Natural killer cell (primary cell): ENCODE measurements at regions of chr13 and their contacts with region 1.

Region 1: GRCh38 chr13:26186118-26186870 is 35.8 kb downstream of the RNF6 start:
- DNase-seq: peak; percentile 91 to 97
- ATAC-seq: peak; percentile 89 to 97 (median 92)
- H3K4me3 ChIP-seq: peak overlapping the region; percentile 69
- H3K4me3 Mint-ChIP-seq: peak overlapping the region; percentile 98
- H3K27ac ChIP-seq: peak overlapping the region; percentile 77
- H3K27ac Mint-ChIP-seq: peak overlapping the region; percentile 93 to 97
- H3K4me1 ChIP-seq: peaks cover 21% of the 10 kb centered on the region
- H3K4me1 Mint-ChIP-seq: peaks cover 9 to 22% of the 10 kb centered on the region in 2 donors
- H3K27me3 ChIP-seq: no peaks in the 10 kb centered on the region
- H3K27me3 Mint-ChIP-seq: no peaks in the 10 kb centered on the region
- CTCF ChIP-seq: peak; percentile 24

Region 2: GRCh38 chr13:26095338-26095737 is 91.0 kb before region 1 on chr13:
- intact Hi-C with region 1: no loop called
- DNase-seq: no peak
- ATAC-seq: no peak
- H3K4me3 ChIP-seq: no peak overlapping the region
- H3K4me3 Mint-ChIP-seq: no peak overlapping the region
- H3K27ac ChIP-seq: no peak overlapping the region
- H3K27ac Mint-ChIP-seq: no peak overlapping the region
- H3K4me1 ChIP-seq: no peaks in the 10 kb centered on the region
- H3K4me1 Mint-ChIP-seq: no peaks in the 10 kb centered on the region
- H3K27me3 ChIP-seq: peaks cover 2% of the 10 kb centered on the region
- H3K27me3 Mint-ChIP-seq: peaks cover 20 to 43% of the 10 kb centered on the region in 2 donors
- CTCF ChIP-seq: no peak

Region 3: DNA sequence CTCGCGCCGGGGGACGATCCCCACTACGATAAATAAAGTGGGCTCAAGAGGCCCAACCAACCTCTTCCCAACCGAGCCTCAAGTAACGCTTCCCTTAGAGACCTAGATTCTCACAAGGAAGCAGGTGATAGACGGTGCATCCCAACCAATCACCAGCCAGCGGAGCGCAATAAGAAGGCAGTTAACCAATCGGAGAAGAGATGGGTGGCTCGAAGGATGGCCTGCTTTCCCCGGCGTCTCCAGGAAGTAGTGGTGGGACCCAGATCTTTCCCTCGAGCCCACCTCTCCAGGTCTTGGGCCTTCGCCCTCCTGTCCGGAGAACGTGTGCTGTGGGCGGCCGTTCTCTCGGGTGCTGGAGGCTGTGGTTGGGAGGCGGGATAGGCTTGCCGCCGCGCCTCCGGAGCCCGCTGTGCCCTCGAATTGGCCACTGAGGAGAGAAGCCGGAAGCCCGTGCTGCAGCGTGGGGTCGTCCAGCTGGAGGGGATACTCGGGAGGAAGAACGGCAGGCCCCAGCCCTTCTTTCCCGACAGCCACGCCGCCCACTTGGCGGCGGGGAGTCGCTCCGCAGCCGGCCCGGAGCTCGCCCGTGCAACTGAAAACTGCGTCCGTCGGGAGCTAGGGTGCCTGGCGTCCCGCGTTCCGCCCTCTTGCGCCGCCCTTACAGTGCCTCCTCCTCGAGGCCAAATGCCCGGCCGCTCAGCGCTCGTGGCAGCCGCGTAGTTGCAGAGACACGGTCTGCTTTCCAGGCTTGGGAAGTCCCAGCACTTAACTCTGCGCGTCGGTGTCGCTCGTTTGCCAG is 35.6 kb after region 1 on chr13 and contains the start of gene RNF6:
- intact Hi-C with region 1: loop called (anchors 1 kb)
- DNase-seq: peak; percentile 87 to 96
- ATAC-seq: peak; percentile 91 to 97 (median 93)
- H3K4me3 ChIP-seq: peak within 1 kb of the TSS; percentile 99
- H3K4me3 Mint-ChIP-seq: peak within 1 kb of the TSS; percentile 92
- H3K27ac ChIP-seq: peak within 1 kb of the TSS; percentile 96
- H3K27ac Mint-ChIP-seq: peak within 1 kb of the TSS; percentile 95 to 98
- H3K4me1 ChIP-seq: peaks cover 13% of the 10 kb centered on the region
- H3K4me1 Mint-ChIP-seq: peaks cover 37 to 43% of the 10 kb centered on the region in 2 donors
- H3K27me3 ChIP-seq: no peaks in the 10 kb centered on the region
- H3K27me3 Mint-ChIP-seq: peaks cover 3 to 10% of the 10 kb centered on the region in 2 donors
- CTCF ChIP-seq: no peak
- total RNA-seq, gene RNF6: 49.8 to 62.3 (median 52.6) TPM

Region 4: GRCh38 chr13:26253787-26254582 is 67.7 kb after region 1 on chr13 and contains the start of gene CDK8:
- intact Hi-C with region 1: loop called (anchors 1 kb)
- DNase-seq: peak; percentile 88 to 94
- ATAC-seq: peak; percentile 86 to 94 (median 87)
- H3K4me3 ChIP-seq: peak within 1 kb of the TSS; percentile 59
- H3K4me3 Mint-ChIP-seq: peak within 1 kb of the TSS; percentile 87
- H3K27ac ChIP-seq: peak within 1 kb of the TSS; percentile 66
- H3K27ac Mint-ChIP-seq: peak within 1 kb of the TSS; percentile 84 to 94
- H3K4me1 ChIP-seq: peaks cover 10% of the 10 kb centered on the region
- H3K4me1 Mint-ChIP-seq: peaks cover 28 to 29% of the 10 kb centered on the region in 2 donors
- H3K27me3 ChIP-seq: peaks cover 2% of the 10 kb centered on the region
- H3K27me3 Mint-ChIP-seq: no peaks in the 10 kb centered on the region
- CTCF ChIP-seq: no peak
- total RNA-seq, gene CDK8: 10.0 to 13.1 (median 10.9) TPM

Region 5: DNA sequence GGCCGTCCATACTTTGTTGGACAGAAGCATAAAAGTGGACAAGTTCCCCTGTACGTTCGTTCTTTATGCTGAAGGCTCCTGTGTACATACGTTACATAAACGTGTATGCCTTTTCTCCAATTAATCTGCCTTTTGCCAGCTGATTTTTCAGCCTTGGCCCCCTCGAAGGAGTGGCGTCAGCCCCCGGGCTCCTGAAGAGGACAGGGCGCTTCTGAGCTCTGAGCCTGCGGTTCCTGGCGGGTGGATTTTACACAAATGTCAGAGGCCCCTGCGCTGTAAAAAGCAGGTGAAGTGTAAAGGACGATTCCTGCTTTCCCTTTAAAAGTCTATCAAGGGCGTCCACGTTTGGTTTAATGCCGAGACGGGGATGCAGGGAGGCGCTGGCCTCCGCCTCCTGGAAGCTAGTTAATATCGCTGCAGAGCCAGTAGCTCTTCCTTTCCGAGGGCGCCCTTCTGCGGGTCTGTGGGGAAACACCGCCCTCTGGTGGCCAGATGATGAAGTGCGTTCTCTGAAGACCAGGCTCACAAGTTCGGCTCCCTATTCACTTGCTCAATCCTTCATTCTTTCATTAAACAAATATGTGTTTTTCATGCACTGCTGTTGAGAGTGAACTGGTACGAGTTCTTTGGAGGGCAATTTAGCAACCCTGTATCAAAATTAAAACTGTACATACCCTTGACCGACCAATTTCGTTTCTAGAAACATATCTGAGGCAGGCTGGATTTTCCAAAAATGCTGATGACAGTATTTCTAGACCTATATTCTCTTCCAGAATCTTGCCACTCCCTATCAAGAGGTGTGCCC is 512.3 kb after region 1 on chr13:
- intact Hi-C with region 1: loop called (anchors 1 kb)
- DNase-seq: peak; percentile 76 to 89
- ATAC-seq: peak; percentile 83 to 99 (median 94)
- H3K4me3 ChIP-seq: no peak overlapping the region
- H3K4me3 Mint-ChIP-seq: no peak overlapping the region
- H3K27ac ChIP-seq: no peak overlapping the region
- H3K27ac Mint-ChIP-seq: no peak overlapping the region
- H3K4me1 ChIP-seq: peaks cover 3% of the 10 kb centered on the region
- H3K4me1 Mint-ChIP-seq: peaks cover 4 to 7% of the 10 kb centered on the region in 2 donors
- H3K27me3 ChIP-seq: no peaks in the 10 kb centered on the region
- H3K27me3 Mint-ChIP-seq: peaks cover 4 to 27% of the 10 kb centered on the region in 2 donors
- CTCF ChIP-seq: peak; percentile 91